PC-9 (cell line): ENCODE measurements at regions of chr5 and their contacts with region 1.

Region 1: DNA sequence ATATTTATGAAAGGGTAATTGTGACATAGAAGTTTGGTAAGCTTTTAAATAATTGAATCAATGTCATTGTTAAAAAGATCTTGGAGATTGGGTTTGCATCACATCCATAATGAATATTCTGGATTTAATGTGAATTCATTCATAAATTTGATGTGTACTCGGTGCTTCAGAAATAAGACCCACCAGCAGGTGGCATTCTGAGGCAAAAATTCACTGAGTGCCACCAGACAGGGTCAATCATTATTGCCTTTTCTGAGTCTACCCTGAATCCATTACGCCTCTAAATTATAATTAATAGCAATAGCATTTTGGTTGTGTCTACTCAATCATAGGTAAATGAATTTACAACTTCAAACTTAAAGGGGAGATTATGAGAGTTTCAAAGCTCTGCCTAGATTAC is 1.0 kb downstream of the TRPC7 start:
- DNase-seq: no peak
- H3K4me3 ChIP-seq: no peak overlapping the region
- H3K27ac ChIP-seq: no peak overlapping the region
- H3K4me1 ChIP-seq: no peaks in the 10 kb centered on the region
- H3K27me3 ChIP-seq: no peaks in the 10 kb centered on the region
- CTCF ChIP-seq: peak; percentile 78

Region 2: GRCh38 chr5:136249678-136250266 is 114.5 kb before region 1 on chr5:
- CTCF ChIA-PET with region 1: no interaction called
- POLR2A ChIA-PET with region 1: no interaction called
- intact Hi-C with region 1: loop called (anchors 5 kb)
- DNase-seq: peak in 1 of 2 experiments; percentile 49
- H3K4me3 ChIP-seq: no peak overlapping the region
- H3K27ac ChIP-seq: no peak overlapping the region
- H3K4me1 ChIP-seq: no peaks in the 10 kb centered on the region
- H3K27me3 ChIP-seq: peaks cover under 1% of the 10 kb centered on the region; the same call in 1 of the 2 replicates
- CTCF ChIP-seq: peak; percentile 89

Region 3: GRCh38 chr5:136285096-136285855 is 79.0 kb before region 1 on chr5:
- CTCF ChIA-PET with region 1: no interaction called
- POLR2A ChIA-PET with region 1: no interaction called
- intact Hi-C with region 1: no loop called
- DNase-seq: no peak
- H3K4me3 ChIP-seq: no peak overlapping the region
- H3K27ac ChIP-seq: no peak overlapping the region
- H3K4me1 ChIP-seq: no peaks in the 10 kb centered on the region
- H3K27me3 ChIP-seq: peaks cover 20% of the 10 kb centered on the region
- CTCF ChIP-seq: no peak